ENCODE measurements at regions of chr1 and their contacts with region 1.

Region 1: GRCh38 chr1:38026592-38027200 is 14.2 kb downstream of the UTP11 start:
- DNase-seq: no peak
- H3K4me3 ChIP-seq: no peak overlapping the region
- H3K27ac ChIP-seq: no peak overlapping the region
- H3K27me3 ChIP-seq: no peaks in the 10 kb centered on the region
- CTCF ChIP-seq: peak; percentile 78

Region 2: GRCh38 chr1:38071312-38072256 is 44.9 kb after region 1 on chr1:
- CTCF ChIA-PET with region 1: interaction called, 18 read pairs
- POLR2A ChIA-PET with region 1: interaction called, 3 read pairs
- DNase-seq: no peak
- H3K4me3 ChIP-seq: no peak overlapping the region
- H3K27ac ChIP-seq: no peak overlapping the region
- H3K27me3 ChIP-seq: peaks cover 44% of the 10 kb centered on the region
- CTCF ChIP-seq: peak; percentile 55

Measured in AG04450 (cell line).